Mammary epithelial cell (primary cell): ENCODE measurements at regions of chr12 and their contacts with region 1.

Region 1: DNA sequence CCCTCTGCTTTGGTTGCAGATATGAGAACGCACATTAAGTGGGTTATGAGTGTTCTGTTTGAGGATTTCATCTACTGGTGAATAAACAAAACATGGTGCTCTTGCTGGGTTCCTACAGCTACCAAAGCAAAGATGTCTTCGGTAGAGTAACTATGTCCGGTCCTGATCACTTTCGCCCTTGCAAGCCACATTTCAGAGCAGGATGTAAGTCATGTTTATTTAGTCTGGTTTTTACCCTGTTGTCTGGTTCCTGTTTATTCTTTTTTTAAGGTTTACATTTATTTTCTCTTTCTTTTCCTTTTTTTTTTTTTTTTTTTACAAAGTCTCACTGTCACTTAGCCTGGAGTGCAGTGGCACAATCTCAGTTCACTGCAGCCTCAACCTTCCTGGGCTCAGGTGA is 99.2 kb downstream of the VEZT start:
- DNase-seq: no peak
- H3K4me3 ChIP-seq: no peak overlapping the region
- H3K27ac ChIP-seq: no peak overlapping the region
- H3K4me1 ChIP-seq: no peaks in the 10 kb centered on the region
- H3K27me3 ChIP-seq: no peaks in the 10 kb centered on the region
- CTCF ChIP-seq: no peak

Region 2: GRCh38 chr12:95304673-95305198 is 12.1 kb before region 1 on chr12:
- CTCF ChIA-PET with region 1: interaction called, 10 read pairs
- dilution Hi-C with region 1: no loop called
- in situ Hi-C with region 1: no loop called
- intact Hi-C with region 1: no loop called
- DNase-seq: no peak
- H3K4me3 ChIP-seq: no peak overlapping the region
- H3K27ac ChIP-seq: no peak overlapping the region
- H3K4me1 ChIP-seq: peaks cover 7% of the 10 kb centered on the region
- H3K27me3 ChIP-seq: no peaks in the 10 kb centered on the region
- CTCF ChIP-seq: no peak

Region 3: DNA sequence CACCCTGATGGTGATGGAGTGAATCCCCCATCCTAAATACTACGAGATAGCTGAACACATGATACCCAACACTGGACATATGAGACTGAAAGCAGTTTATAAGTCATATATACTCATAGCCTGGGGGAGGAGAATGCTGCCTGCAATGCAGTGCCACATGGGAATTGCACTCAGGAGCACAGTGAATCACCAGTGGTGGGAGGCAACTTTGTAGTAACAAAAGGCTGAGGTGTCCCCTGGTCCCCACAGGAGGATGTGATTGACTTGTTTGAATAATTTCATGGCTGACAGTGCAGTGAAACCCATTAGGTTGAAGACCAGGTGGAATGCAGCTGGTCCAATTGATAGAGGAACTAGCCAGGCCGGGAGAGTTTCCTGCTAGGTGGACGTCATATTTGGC is 605.4 kb after region 1 on chr12:
- CTCF ChIA-PET with region 1: no interaction called
- dilution Hi-C with region 1: no loop called
- in situ Hi-C with region 1: no loop called
- intact Hi-C with region 1: no loop called
- DNase-seq: peak; percentile 18
- H3K4me3 ChIP-seq: no peak overlapping the region
- H3K27ac ChIP-seq: no peak overlapping the region
- H3K4me1 ChIP-seq: no peaks in the 10 kb centered on the region
- H3K27me3 ChIP-seq: no peaks in the 10 kb centered on the region
- CTCF ChIP-seq: no peak